Activated CD4-positive, alpha-beta T cell treated with anti-CD3 and anti-CD28 coated beads for 36 hours (primary cell): ENCODE measurements at regions of chr5 and their contacts with region 1.

Region 1: GRCh38 chr5:152532714-152533113 is 127.6 kb upstream of the NMUR2 start:
- DNase-seq: no peak
- ATAC-seq: no peak
- H3K4me3 Mint-ChIP-seq: no peak overlapping the region
- H3K27ac Mint-ChIP-seq: no peak overlapping the region
- H3K4me1 Mint-ChIP-seq: no peaks in the 10 kb centered on the region
- H3K27me3 Mint-ChIP-seq: no peaks in the 10 kb centered on the region

Region 2: DNA sequence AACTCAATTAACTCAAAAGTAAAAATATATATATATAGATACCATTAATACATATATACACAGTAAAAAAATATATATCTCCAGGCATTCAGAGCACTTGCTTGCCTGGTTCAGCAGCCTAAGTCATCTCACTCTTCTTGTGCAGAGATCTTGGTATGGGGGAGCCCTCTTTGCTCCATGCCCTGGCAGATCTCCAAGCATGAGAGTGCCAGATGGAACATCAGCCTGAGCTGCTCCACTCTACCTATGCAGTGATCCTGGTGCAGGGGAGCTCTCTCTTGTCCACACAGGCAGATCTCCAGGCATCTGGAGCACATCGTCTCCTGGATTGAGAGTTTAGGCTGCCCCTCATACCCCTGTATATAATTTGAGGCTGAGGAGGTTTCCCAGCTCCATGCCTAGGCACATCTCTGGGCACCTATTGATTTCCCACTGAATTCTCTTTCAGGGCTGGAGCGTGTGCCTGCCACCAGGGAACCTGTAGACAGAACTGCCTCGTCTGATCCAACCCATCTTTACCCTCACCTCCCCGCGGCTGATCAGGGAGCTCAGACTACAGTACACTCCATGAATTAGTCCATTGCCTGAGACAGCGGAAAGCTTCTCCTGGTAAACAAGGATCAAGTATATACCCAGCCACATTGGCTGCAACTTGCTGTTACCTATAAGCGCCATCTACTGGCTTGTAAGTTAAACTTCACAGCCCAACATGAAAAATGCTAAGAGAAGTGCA is 615.3 kb after region 1 on chr5:
- CTCF ChIA-PET with region 1: no interaction called
- POLR2A ChIA-PET with region 1: no interaction called
- intact Hi-C with region 1: loop called in 1 of 2 experiments (anchors 1 kb)
- DNase-seq: no peak
- ATAC-seq: no peak
- H3K4me3 Mint-ChIP-seq: no peak overlapping the region
- H3K27ac Mint-ChIP-seq: no peak overlapping the region
- H3K4me1 Mint-ChIP-seq: no peaks in the 10 kb centered on the region
- H3K27me3 Mint-ChIP-seq: no peaks in the 10 kb centered on the region

Region 3: DNA sequence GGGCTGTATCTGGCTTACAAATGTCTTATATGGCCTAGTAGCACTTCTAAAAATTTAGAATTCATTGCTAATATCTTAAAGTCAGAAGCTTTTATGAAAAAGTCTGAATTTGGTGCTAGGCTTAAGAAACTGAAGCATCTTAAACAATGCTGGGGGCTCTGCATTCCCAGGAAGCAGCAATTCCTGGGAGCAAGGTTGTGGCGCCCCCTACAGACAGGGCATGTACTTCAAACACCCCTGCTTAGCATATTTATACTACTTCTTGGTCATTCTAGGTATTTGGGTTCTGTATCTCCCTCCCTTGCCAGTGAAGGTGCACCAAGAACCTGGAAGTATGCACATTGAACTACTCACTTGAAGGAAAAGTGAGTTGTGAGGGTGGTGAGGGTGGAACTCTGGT is 893.2 kb after region 1 on chr5:
- CTCF ChIA-PET with region 1: no interaction called
- POLR2A ChIA-PET with region 1: no interaction called
- intact Hi-C with region 1: loop called in 1 of 2 experiments (anchors 10 kb)
- DNase-seq: peak; percentile 32
- ATAC-seq: no peak
- H3K4me3 Mint-ChIP-seq: no peak overlapping the region
- H3K27ac Mint-ChIP-seq: no peak overlapping the region
- H3K4me1 Mint-ChIP-seq: no peaks in the 10 kb centered on the region
- H3K27me3 Mint-ChIP-seq: no peaks in the 10 kb centered on the region

Region 4: GRCh38 chr5:153964880-153965645 is 1432.3 kb after region 1 on chr5:
- CTCF ChIA-PET with region 1: interaction called, 16 read pairs
- POLR2A ChIA-PET with region 1: no interaction called
- intact Hi-C with region 1: loop called (anchors 1 to 5 kb)
- DNase-seq: peak; percentile 65
- ATAC-seq: peak; percentile 68
- H3K4me3 Mint-ChIP-seq: no peak overlapping the region
- H3K27ac Mint-ChIP-seq: no peak overlapping the region
- H3K4me1 Mint-ChIP-seq: peaks cover 6% of the 10 kb centered on the region
- H3K27me3 Mint-ChIP-seq: peaks cover 4% of the 10 kb centered on the region